Right cardiac atrium (tissue), 5 donors: ENCODE measurements at regions of chr5 and their contacts with region 1.

Region 1: DNA sequence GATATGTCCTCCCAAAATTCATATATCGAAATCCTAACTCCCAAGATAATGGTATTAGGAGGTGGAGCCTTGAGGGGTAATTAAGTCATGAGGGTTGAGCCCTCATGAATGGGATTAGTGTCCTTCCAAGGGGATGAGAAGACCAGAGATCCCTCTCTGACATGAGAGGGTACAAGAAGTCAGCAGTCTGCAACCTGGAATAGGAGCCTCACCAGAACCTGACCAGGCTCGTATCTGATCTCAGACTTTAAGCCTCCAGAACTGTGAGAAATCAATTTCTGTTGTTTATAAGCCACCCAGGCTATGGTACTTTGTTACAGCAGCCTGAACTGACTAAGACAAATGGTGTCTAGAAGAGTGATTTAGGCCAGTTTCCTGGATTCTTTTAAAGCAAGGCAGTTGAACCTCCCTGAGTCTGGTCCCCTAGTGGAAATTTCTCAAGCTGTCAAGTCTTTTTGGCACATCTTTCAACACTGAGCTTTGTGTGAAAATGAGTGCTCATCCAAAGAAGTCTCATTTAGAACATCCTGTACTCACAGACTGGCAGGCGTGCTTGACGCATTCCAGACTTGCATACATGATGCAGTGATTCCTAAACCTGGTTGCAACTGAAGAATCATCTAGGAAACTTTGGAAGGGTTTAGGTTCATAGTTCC is 254.8 kb upstream of the PPP1R2B start:
- DNase-seq: peak; percentile 57 to 82 (median 70)
- ATAC-seq: peak; percentile 88 to 90
- H3K4me3 ChIP-seq: no peak overlapping the region
- H3K27ac ChIP-seq: peak overlapping the region; percentile 88
- H3K4me1 ChIP-seq: peaks cover 5% of the 10 kb centered on the region
- H3K27me3 ChIP-seq: no peaks in the 10 kb centered on the region

Region 2: GRCh38 chr5:156686796-156687195 is 91.5 kb after region 1 on chr5:
- intact Hi-C with region 1: loop called in 1 of 4 experiments (anchors 10 kb)
- DNase-seq: peak in 1 of 3 donors; percentile 36
- ATAC-seq: peak; percentile 62 to 81
- H3K4me3 ChIP-seq: no peak overlapping the region
- H3K27ac ChIP-seq: peak overlapping the region; percentile 80
- H3K4me1 ChIP-seq: no peaks in the 10 kb centered on the region
- H3K27me3 ChIP-seq: no peaks in the 10 kb centered on the region